ENCODE measurements at regions of chr3 and their contacts with region 1.

Region 1: DNA sequence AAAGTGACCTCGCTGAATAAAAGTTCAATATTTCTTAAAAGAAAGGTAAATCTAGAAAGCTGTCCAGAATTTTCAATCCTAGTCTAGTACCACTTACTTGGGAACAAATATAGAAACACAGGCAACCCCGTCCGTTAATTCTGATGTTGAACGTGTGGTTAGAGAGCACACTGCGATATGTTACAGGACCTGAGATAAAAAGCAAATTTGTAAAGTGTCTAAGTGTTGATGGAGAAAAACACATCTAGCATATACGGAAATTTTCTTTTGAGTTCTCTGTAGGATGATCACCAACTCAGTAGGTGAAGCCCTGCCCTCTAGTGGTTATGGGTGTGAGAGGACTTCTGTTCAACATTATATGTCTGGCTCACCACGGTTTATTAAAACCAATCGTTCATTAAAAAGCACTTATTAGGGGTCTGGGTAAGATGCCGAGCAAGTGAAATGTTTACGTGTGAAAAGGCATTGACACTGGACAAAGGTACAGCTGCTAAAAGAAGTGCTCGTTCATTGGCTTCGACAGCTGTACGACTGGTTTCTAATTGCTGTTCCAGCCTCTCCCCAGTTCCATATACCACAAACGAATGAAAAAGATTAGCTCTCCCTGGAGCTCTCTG is 1.0 kb upstream of the ATP2C1 start:
- DNase-seq: peak; percentile 39 to 81 (median 52)
- ATAC-seq: peak; percentile 66
- H3K4me3 ChIP-seq: peak overlapping the region; percentile 86
- H3K27ac ChIP-seq: peak overlapping the region; percentile 97
- H3K4me1 ChIP-seq: peaks cover 8% of the 10 kb centered on the region in 2 experiments; a peak in 3 of 5 replicates
- H3K27me3 ChIP-seq: no peaks in the 10 kb centered on the region
- CTCF ChIP-seq: peak; percentile 59 to 78 (median 72); a peak in 5 of 6 replicates
- EP300 ChIP-seq: no peak
- POLR2A ChIP-seq: no peak
- RAD21 ChIP-seq: peak; percentile 83 to 86

Region 2: DNA sequence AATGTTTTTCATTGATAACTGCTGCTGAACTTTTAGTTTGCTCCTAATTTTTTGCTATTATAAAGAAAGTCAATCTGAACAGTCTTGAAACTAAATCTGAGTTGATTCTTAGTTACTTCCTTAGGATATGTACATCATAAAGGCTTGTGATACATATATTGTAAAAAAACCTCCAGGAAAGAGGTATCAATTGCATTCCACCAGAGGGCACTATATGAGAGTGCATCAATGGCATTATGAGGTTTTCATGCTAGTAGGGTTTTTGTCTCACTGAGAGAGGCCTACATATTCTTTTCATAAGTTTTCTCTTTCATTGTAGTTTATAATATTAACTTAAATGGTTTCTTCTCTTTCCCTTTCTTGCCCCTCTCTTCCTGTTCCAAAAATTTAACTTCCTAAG is 193.1 kb before region 1 on chr3:
- CTCF ChIA-PET with region 1: no interaction called
- POLR2A ChIA-PET with region 1: no interaction called
- in situ Hi-C with region 1: no loop called
- intact Hi-C with region 1: loop called (anchors 2 kb)
- DNase-seq: peak; percentile 12 to 27 (median 20)
- ATAC-seq: peak; percentile 73
- H3K4me3 ChIP-seq: no peak overlapping the region
- H3K27ac ChIP-seq: no peak overlapping the region
- H3K4me1 ChIP-seq: no peaks in the 10 kb centered on the region
- H3K27me3 ChIP-seq: no peaks in the 10 kb centered on the region
- CTCF ChIP-seq: peak; percentile 25 to 63 (median 35); a peak in 4 of 6 replicates
- EP300 ChIP-seq: no peak
- POLR2A ChIP-seq: no peak
- RAD21 ChIP-seq: peak in 1 of 2 experiments; percentile 72; a peak in 2 of 4 replicates

Region 3: DNA sequence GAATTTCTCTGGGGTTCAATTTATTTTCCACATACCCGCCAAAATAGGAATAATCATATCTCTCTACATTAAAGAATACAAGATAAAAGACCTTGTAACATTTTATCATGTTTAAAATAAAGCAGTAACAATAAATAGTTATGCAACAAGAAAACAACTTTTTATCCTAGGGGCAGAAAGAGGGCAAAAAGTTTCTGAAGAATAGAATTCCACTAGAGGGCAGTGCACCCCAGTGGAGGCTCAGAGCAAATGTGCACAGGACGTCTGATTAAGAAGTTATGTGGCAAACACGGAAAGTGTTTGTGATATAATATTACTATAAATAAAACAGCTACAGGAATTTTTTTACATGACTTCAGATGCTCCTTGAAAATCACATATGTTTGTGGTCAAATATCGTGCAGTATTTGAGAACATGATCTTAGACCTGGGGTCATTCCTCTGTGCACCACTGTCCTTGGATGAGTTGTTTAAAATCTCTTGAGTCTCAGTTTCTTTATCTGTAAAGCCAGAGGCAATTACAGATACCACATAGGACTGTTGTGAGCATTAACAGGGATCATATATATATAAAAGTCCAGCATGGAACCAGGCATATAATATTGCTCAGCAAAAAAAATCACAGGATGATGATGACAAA is 133.0 kb before region 1 on chr3:
- CTCF ChIA-PET with region 1: interaction called, 26 read pairs
- POLR2A ChIA-PET with region 1: no interaction called
- in situ Hi-C with region 1: loop called (anchors 5 kb)
- intact Hi-C with region 1: loop called (anchors 1 kb)
- DNase-seq: peak in 3 of 4 experiments; percentile 8 to 72 (median 42)
- ATAC-seq: peak; percentile 91
- H3K4me3 ChIP-seq: no peak overlapping the region
- H3K27ac ChIP-seq: no peak overlapping the region
- H3K4me1 ChIP-seq: no peaks in the 10 kb centered on the region; a peak in 1 of 5 replicates
- H3K27me3 ChIP-seq: no peaks in the 10 kb centered on the region
- CTCF ChIP-seq: peak; percentile 67 to 79 (median 78)
- EP300 ChIP-seq: peak; percentile 7; the same call in 1 of the 2 replicates
- POLR2A ChIP-seq: no peak
- RAD21 ChIP-seq: peak; percentile 85 to 89

Region 4: DNA sequence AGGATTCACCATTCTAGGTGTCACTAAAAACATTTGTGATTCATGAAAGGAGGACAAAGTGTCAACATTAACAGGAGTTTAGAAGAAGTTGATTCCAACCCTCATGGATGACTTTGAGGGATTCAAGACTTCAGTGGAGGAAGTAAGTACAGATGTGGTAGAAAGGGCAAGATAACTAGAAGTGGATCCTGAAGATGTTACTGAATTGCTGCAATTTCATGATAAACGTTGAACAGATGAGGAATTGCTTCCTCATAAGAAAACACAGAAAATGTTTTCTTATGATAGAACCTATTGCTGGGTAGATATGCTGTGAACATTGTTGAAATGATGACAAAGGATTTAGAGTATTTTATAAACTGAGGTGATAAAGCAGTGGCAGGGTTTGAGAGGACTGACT is 22.4 kb before region 1 on chr3:
- CTCF ChIA-PET with region 1: no interaction called
- POLR2A ChIA-PET with region 1: no interaction called
- in situ Hi-C with region 1: no loop called
- intact Hi-C with region 1: no loop called
- DNase-seq: peak in 1 of 4 experiments; percentile 18
- ATAC-seq: no peak
- H3K4me3 ChIP-seq: no peak overlapping the region
- H3K27ac ChIP-seq: no peak overlapping the region
- H3K4me1 ChIP-seq: peaks cover 0 to 4% of the 10 kb centered on the region in 2 experiments; a peak in 2 of 5 replicates
- H3K27me3 ChIP-seq: no peaks in the 10 kb centered on the region
- CTCF ChIP-seq: no peak
- EP300 ChIP-seq: peak; percentile 15; the same call in 1 of the 2 replicates
- POLR2A ChIP-seq: no peak
- RAD21 ChIP-seq: no peak

Region 5: DNA sequence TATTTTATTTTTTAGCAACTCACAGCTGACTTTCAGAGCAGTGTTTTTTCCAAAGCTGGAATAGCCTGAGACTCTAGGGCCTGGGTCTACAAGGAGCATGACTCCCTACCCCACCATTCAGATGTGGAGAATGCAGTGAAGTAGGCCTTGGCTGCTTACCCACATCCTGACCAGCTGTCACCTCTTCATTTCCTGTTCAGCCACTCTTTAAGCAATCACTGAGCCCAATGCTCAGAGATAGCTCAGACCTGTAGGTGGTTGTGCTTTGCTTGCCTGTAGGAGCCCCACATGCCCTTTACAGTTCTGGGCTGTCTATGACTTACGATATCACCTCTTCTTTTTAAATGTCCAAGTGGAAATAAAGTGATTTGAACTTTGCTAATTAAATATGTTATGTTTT is 281.9 kb after region 1 on chr3:
- CTCF ChIA-PET with region 1: no interaction called
- POLR2A ChIA-PET with region 1: no interaction called
- in situ Hi-C with region 1: no loop called
- intact Hi-C with region 1: no loop called
- DNase-seq: no peak
- ATAC-seq: no peak
- H3K4me3 ChIP-seq: no peak overlapping the region
- H3K27ac ChIP-seq: no peak overlapping the region
- H3K4me1 ChIP-seq: no peaks in the 10 kb centered on the region
- H3K27me3 ChIP-seq: no peaks in the 10 kb centered on the region
- CTCF ChIP-seq: no peak
- EP300 ChIP-seq: no peak
- POLR2A ChIP-seq: no peak
- RAD21 ChIP-seq: no peak